Activated CD8-positive, alpha-beta T cell treated with anti-CD3 and anti-CD28 coated beads, Interleukin-2, amount 10 ng/mL, durations not matched to agents 7 days and 5 days (primary cell): ENCODE measurements at regions of chr15 and their contacts with region 1.

Region 1: GRCh38 chr15:73697033-73697467 is 12.9 kb downstream of the CD276 start:
- DNase-seq: peak; percentile 91
- ATAC-seq: peak; percentile 90
- H3K4me3 Mint-ChIP-seq: peak overlapping the region; percentile 30
- H3K27ac Mint-ChIP-seq: no peak overlapping the region
- H3K4me1 Mint-ChIP-seq: peaks cover 35% of the 10 kb centered on the region
- H3K27me3 Mint-ChIP-seq: peaks cover 59% of the 10 kb centered on the region

Region 2: GRCh38 chr15:73540161-73540560 is 156.9 kb before region 1 on chr15:
- CTCF ChIA-PET with region 1: interaction called, 12 read pairs
- POLR2A ChIA-PET with region 1: no interaction called
- DNase-seq: no peak
- ATAC-seq: no peak
- H3K4me3 Mint-ChIP-seq: no peak overlapping the region
- H3K27ac Mint-ChIP-seq: no peak overlapping the region
- H3K4me1 Mint-ChIP-seq: no peaks in the 10 kb centered on the region
- H3K27me3 Mint-ChIP-seq: peaks cover 5% of the 10 kb centered on the region

Region 3: GRCh38 chr15:73560501-73561117 is 136.4 kb before region 1 on chr15:
- CTCF ChIA-PET with region 1: interaction called, 21 read pairs
- POLR2A ChIA-PET with region 1: interaction called, 4 read pairs
- DNase-seq: peak; percentile 51
- ATAC-seq: no peak
- H3K4me3 Mint-ChIP-seq: no peak overlapping the region
- H3K27ac Mint-ChIP-seq: no peak overlapping the region
- H3K4me1 Mint-ChIP-seq: peaks cover 8% of the 10 kb centered on the region
- H3K27me3 Mint-ChIP-seq: no peaks in the 10 kb centered on the region

Region 4: DNA sequence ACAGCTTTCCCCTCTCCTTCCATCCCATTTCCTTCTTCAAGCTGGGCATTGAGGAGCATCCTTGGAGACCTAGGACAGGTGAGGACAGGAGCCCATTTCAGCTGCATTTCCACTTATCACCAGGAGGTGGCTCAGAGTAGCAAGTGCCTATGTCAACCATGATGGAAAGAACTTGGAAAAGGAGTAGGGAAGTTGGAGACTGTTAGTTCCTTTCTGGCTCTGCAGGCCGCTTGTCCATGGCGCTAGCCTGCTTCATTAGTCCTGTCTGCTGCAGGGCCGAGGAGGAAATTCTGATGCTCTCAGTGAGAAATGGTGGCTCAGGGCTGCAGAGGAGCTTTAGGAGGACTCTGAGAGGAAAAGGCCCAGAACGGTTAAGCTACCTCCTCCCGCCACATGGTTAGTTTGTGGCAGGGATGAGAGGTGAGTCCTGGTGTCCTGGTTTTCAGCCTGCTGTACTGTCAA is 19.9 kb before region 1 on chr15:
- CTCF ChIA-PET with region 1: interaction called, 108 read pairs
- POLR2A ChIA-PET with region 1: interaction called, 3 read pairs
- DNase-seq: peak; percentile 63
- ATAC-seq: peak; percentile 65
- H3K4me3 Mint-ChIP-seq: no peak overlapping the region
- H3K27ac Mint-ChIP-seq: no peak overlapping the region
- H3K4me1 Mint-ChIP-seq: peaks cover 12% of the 10 kb centered on the region
- H3K27me3 Mint-ChIP-seq: peaks cover 47% of the 10 kb centered on the region

Region 5: GRCh38 chr15:73683777-73684580 is 13.1 kb before region 1 on chr15 and contains the start of gene CD276:
- CTCF ChIA-PET with region 1: interaction called, 108 read pairs
- POLR2A ChIA-PET with region 1: interaction called, 3 read pairs
- DNase-seq: peak; percentile 20
- ATAC-seq: peak; percentile 64
- H3K4me3 Mint-ChIP-seq: no peak within 1 kb of the TSS
- H3K27ac Mint-ChIP-seq: no peak within 1 kb of the TSS
- H3K4me1 Mint-ChIP-seq: peaks cover 11% of the 10 kb centered on the region
- H3K27me3 Mint-ChIP-seq: peaks cover 75% of the 10 kb centered on the region
- total RNA-seq, gene CD276: not detected